AG04450 (cell line): ENCODE measurements at regions of chr10 and their contacts with region 1.

Region 1: DNA sequence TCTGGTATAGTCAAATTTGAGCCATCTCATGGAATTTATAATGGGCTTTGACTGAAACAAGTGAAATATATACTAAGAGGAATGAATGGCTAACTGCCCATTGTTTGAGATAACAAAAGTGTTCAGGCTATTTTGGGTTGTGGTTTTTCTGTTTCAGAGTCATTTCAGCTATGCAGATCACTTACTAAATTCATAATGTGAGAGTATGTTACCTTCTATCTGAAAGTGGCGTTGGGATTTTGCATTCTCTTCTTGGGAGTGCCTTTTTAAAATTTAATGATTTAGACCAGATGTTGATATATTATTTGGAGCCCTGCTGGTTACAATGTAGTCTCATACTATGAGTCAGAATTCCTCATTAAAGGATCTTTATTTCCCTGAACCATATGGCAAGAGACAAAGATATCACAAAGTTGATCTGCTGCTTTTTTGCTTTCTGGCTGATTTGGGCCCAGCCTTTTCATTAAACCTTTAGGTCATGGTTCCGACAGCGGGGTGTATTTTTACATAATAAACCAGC is 10.4 kb downstream of the VCL start:
- DNase-seq: peak; percentile 54
- H3K4me3 ChIP-seq: peak overlapping the region; percentile 8; the same call in 1 of the 2 replicates
- H3K27ac ChIP-seq: peak overlapping the region; percentile 77
- H3K27me3 ChIP-seq: no peaks in the 10 kb centered on the region
- CTCF ChIP-seq: no peak

Region 2: GRCh38 chr10:74021248-74022055 is 13.2 kb after region 1 on chr10:
- CTCF ChIA-PET with region 1: interaction called, 3 read pairs
- POLR2A ChIA-PET with region 1: interaction called, 10 read pairs
- DNase-seq: peak; percentile 74
- H3K4me3 ChIP-seq: peak overlapping the region; percentile 23; the same call in 1 of the 2 replicates
- H3K27ac ChIP-seq: peak overlapping the region; percentile 81
- H3K27me3 ChIP-seq: no peaks in the 10 kb centered on the region
- CTCF ChIP-seq: no peak

Region 3: DNA sequence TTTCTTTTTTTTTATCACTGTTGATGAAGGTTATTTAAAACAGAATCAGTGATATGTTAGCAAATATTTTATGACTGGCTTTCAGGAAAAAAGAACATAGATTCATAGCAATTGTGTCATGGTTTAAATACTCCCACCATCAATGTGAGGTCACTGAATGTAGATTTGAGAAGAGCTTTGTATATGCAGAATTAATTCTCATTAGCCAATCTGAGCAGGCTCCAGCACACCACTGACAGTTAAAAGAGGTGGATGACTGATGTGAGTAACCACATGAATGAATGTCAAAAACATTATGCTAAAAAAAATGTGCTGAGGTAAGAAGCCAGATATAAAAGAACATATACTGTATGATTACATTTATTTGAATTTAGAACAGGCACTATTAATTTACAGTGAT is 643.3 kb after region 1 on chr10:
- CTCF ChIA-PET with region 1: no interaction called
- POLR2A ChIA-PET with region 1: no interaction called
- DNase-seq: no peak
- H3K4me3 ChIP-seq: no peak overlapping the region
- H3K27ac ChIP-seq: no peak overlapping the region
- H3K27me3 ChIP-seq: no peaks in the 10 kb centered on the region
- CTCF ChIP-seq: no peak